Activated T-helper 1 cell treated with anti-CD3 and anti-CD28 coated beads, Interleukin-12 subunit alpha, Interleukin-12 subunit beta, Interleukin-2, Interleukin-4 antibody, amounts not matched to agents 30 ng/mL and 10 ng/mL and 1 ng/mL, durations not matched to agents 14 hours and 24 hours and 36 hours (primary cell): ENCODE measurements at regions of chr21 and their contacts with region 1.

Region 1: GRCh38 chr21:25790122-25790877 is 55.5 kb downstream of the GABPA start:
- DNase-seq: no peak
- H3K4me3 Mint-ChIP-seq: peak overlapping the region; percentile 43
- H3K27ac Mint-ChIP-seq: peak overlapping the region; percentile 51
- H3K4me1 Mint-ChIP-seq: peaks cover 17% of the 10 kb centered on the region
- H3K27me3 Mint-ChIP-seq: peaks cover 18% of the 10 kb centered on the region

Region 2: GRCh38 chr21:25801217-25802014 is 11.1 kb after region 1 on chr21:
- intact Hi-C with region 1: loop called (anchors 1 kb)
- DNase-seq: peak; percentile 85
- H3K4me3 Mint-ChIP-seq: no peak overlapping the region
- H3K27ac Mint-ChIP-seq: no peak overlapping the region
- H3K4me1 Mint-ChIP-seq: peaks cover 7% of the 10 kb centered on the region
- H3K27me3 Mint-ChIP-seq: peaks cover 14% of the 10 kb centered on the region